ENCODE measurements at regions of chr3 and their contacts with region 1.

Region 1: GRCh38 chr3:152258448-152259393 is 10.0 kb upstream of the MBNL1 start:
- DNase-seq: peak; percentile 49
- H3K4me3 Mint-ChIP-seq: peak overlapping the region; percentile 74
- H3K27ac Mint-ChIP-seq: peak overlapping the region; percentile 97
- H3K4me1 Mint-ChIP-seq: peaks cover 78% of the 10 kb centered on the region
- H3K27me3 Mint-ChIP-seq: no peaks in the 10 kb centered on the region

Region 2: DNA sequence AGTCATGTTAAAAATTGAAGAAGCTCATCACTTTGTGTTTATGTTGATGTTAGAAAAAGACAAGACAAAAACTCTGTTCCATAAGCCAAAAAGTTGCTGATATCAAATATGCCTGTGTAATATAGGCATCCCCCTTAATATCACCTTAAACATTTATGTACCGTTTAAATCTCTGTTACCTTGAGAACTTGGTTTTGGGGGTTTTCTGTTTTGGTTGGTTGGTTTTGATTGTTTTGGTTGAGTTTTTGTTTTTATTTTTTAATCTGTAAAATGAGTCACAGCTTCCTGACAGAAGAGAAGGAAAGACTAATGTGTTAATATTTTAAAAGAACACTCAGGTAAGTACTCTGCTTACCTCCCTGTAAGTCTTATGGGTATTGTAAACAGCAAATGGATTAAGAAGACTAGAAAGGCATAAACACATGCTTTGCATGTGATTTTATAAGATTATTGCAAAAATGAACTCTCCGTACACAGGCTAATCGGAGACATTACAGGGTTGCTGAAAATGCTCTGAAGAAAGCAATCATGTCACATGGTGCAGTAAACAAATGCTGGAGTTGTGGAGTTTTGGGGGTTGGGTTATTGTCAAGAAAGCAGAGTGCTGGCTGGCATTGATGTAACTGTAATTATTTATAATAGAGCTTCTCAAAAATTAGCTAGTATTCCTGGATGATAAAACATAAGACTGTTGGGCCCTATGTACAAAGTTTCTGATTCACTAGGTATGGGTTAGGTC is 59.5 kb before region 1 on chr3:
- intact Hi-C with region 1: loop called (anchors 2 kb)
- DNase-seq: no peak
- H3K4me3 Mint-ChIP-seq: peak overlapping the region; percentile 74
- H3K27ac Mint-ChIP-seq: peak overlapping the region; percentile 98
- H3K4me1 Mint-ChIP-seq: peaks cover 73% of the 10 kb centered on the region
- H3K27me3 Mint-ChIP-seq: no peaks in the 10 kb centered on the region

Region 3: GRCh38 chr3:152241142-152242017 is 17.3 kb before region 1 on chr3:
- intact Hi-C with region 1: loop called (anchors 2 kb)
- DNase-seq: no peak
- H3K4me3 Mint-ChIP-seq: peak overlapping the region; percentile 66
- H3K27ac Mint-ChIP-seq: peak overlapping the region; percentile 77
- H3K4me1 Mint-ChIP-seq: peaks cover 54% of the 10 kb centered on the region
- H3K27me3 Mint-ChIP-seq: no peaks in the 10 kb centered on the region

Region 4: DNA sequence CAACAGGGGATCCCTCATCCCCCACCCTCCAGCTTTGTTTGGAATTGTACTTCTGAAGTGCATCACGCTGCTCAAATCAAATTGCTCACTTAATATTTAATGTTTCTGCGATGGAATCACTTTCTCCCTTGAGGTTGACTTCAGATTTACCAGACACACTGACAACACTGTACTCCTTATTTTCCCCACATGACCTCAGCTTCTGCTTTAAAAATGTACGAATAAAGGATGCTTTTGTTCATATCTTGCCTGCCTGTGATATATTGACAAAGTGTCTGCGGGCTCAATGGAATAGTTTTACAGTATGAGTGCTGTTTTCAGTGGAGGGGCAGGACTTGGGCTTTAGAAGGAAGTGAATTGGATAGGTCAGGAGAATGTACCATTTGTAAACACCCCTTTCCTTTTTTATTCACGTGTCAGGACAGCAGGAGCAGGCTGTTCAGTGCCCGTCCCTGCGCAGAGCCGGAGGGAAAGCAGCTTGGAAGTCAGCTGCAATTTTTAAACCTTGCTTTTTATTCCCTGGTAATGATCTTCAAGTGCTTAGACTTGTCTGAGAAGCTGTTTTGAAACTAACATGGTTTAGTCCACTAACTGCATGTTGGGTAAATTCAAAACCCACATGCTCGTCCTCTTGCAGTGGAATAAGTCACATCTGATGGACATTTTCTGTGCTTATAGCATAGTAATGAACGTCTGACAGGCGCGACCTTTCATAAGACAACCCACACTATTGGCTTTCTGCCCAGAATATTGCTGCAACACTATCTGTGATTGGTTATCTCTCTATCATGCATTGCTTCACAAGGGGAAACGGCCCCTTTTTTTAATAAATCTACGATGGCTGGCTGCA is 39.9 kb after region 1 on chr3:
- intact Hi-C with region 1: loop called (anchors 1 kb)
- DNase-seq: peak; percentile 47
- H3K4me3 Mint-ChIP-seq: peak overlapping the region; percentile 78
- H3K27ac Mint-ChIP-seq: peak overlapping the region; percentile 97
- H3K4me1 Mint-ChIP-seq: peaks cover 66% of the 10 kb centered on the region
- H3K27me3 Mint-ChIP-seq: no peaks in the 10 kb centered on the region

Measured in activated T-helper 2 cell treated with anti-CD3 and anti-CD28 coated beads, Interferon-gamma antibody, Interleukin-2, Interleukin-4, amounts not matched to agents 10 μg/mL and 5 μg/mL and 100 μg/mL, durations not matched to agents 14 hours and 24 hours and 36 hours (primary cell).